ENCODE measurements at regions of chr20 and their contacts with region 1.

Region 1: GRCh38 chr20:19205977-19206396 is 6.5 kb upstream of the SLC24A3 start:
- DNase-seq: peak; percentile 69
- H3K4me3 ChIP-seq: no peak overlapping the region; a peak in 1 of 4 replicates
- H3K27ac ChIP-seq: no peak overlapping the region
- H3K4me1 ChIP-seq: no peaks in the 10 kb centered on the region; a peak in 1 of 4 replicates
- H3K27me3 ChIP-seq: peaks cover 29% of the 10 kb centered on the region
- CTCF ChIP-seq: peak; percentile 92
- EP300 ChIP-seq: no peak
- RAD21 ChIP-seq: peak; percentile 64

Region 2: GRCh38 chr20:19193349-19193748 is 12.6 kb before region 1 on chr20:
- CTCF ChIA-PET with region 1: interaction called, 19 read pairs
- POLR2A ChIA-PET with region 1: no interaction called
- DNase-seq: no peak
- H3K4me3 ChIP-seq: no peak overlapping the region
- H3K27ac ChIP-seq: no peak overlapping the region
- H3K4me1 ChIP-seq: no peaks in the 10 kb centered on the region
- H3K27me3 ChIP-seq: no peaks in the 10 kb centered on the region
- CTCF ChIP-seq: no peak
- EP300 ChIP-seq: no peak
- RAD21 ChIP-seq: no peak

Region 3: GRCh38 chr20:19218411-19218810 is 12.4 kb after region 1 on chr20:
- CTCF ChIA-PET with region 1: interaction called, 11 read pairs
- POLR2A ChIA-PET with region 1: no interaction called
- DNase-seq: no peak
- H3K4me3 ChIP-seq: no peak overlapping the region
- H3K27ac ChIP-seq: no peak overlapping the region
- H3K4me1 ChIP-seq: peaks cover 0 to 10% of the 10 kb centered on the region in 2 experiments; a peak in 1 of 4 replicates
- H3K27me3 ChIP-seq: peaks cover 31% of the 10 kb centered on the region; the same call in 1 of the 2 replicates
- CTCF ChIP-seq: no peak
- EP300 ChIP-seq: no peak
- RAD21 ChIP-seq: no peak

Region 4: DNA sequence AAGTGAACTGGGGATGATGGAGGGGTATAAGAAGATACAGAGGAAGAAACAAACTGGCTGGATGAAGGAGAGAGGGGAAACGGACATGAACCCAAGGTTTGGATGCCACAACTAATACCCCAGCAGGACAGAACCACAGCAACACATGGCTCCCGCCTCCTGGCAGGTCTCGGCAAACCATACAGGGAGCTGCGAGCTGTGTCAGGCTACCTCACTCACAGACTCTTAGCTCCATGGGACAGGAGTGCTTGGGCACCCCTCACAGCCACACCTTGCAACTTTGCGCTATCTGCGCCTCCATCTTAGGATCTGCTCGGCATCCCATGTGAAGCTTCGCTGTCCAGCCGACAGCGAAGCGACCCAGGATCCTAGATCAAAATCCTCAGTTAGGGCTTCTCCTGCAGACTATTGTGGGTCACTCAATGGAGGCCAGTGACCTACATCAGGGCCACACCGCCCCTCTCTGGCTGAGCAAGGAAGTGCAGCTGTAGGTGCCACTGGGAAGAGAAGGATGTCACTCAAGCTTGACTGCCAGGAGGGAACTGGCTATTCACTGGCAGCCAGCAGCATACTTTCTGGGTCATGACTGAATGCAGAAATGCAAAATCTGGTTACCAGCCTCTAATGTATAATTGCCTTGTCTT is 377.7 kb after region 1 on chr20:
- CTCF ChIA-PET with region 1: interaction called, 28 read pairs
- POLR2A ChIA-PET with region 1: no interaction called
- DNase-seq: peak; percentile 67
- H3K4me3 ChIP-seq: no peak overlapping the region; a peak in 1 of 4 replicates
- H3K27ac ChIP-seq: no peak overlapping the region
- H3K4me1 ChIP-seq: no peaks in the 10 kb centered on the region; a peak in 1 of 4 replicates
- H3K27me3 ChIP-seq: peaks cover 40% of the 10 kb centered on the region; the same call in 1 of the 2 replicates
- CTCF ChIP-seq: peak; percentile 75
- EP300 ChIP-seq: no peak
- RAD21 ChIP-seq: peak; percentile 68

Measured in SK-N-SH (cell line).